T-cell (primary cell): ENCODE measurements at regions of chr4 and their contacts with region 1.

Region 1: DNA sequence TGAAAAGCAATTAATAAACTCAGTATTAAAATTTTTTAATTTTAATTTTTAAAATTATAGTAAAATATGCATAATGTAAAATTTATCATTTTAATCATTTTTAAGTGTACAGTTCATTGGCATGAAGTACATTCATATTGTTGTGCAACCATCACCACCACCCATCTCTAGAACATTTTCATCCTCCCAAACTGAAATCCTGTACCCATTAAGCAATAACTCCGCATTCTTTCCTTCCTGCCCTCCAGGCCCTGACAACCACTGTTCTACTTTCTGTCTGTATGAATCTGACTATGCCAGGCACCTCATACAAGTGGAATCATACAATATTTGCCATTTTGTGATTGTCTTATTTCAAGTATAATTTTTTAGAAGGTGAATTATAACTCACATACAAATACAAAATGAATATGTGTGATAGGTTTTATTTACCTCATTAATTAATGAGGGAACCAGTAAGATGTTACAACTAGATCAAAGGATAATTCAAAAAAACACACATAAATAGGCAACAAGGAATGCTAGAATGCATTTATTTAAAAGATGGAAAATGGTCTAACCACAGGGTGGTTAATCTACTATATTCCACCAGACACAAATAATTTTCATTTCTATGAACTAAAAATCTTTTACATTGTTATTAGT is 13.1 kb upstream of the AFF1 start:
- DNase-seq: no peak
- ATAC-seq: no peak
- H3K4me3 ChIP-seq: no peak overlapping the region
- H3K4me3 Mint-ChIP-seq: no peak overlapping the region
- H3K27ac ChIP-seq: no peak overlapping the region
- H3K27ac Mint-ChIP-seq: no peak overlapping the region
- H3K4me1 ChIP-seq: no peaks in the 10 kb centered on the region
- H3K4me1 Mint-ChIP-seq: peaks cover 0 to 3% (median 2%) of the 10 kb centered on the region in 3 donors
- H3K27me3 ChIP-seq: no peaks in the 10 kb centered on the region
- H3K27me3 Mint-ChIP-seq: no peaks in the 10 kb centered on the region

Region 2: DNA sequence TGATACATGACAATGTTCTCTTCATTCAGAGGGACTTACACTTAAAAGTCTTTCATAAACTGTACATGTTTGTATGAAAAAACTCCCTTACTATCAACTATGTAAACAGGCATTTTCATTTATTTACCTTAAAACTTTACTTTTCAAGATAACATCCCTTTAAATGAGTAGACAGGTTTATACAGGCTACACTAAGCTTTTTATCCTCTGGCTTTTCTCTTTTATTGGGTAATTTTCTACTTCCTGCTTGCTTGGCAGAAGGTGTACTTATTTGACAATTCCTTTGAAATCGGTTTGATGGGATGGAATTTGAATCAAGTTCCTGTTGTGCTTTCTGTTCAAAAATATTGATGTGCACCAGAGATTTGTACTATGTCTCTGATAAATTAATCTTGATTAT is 246.2 kb before region 1 on chr4:
- CTCF ChIA-PET with region 1: no interaction called
- POLR2A ChIA-PET with region 1: no interaction called
- DNase-seq: no peak
- ATAC-seq: no peak
- H3K4me3 ChIP-seq: no peak overlapping the region
- H3K4me3 Mint-ChIP-seq: no peak overlapping the region
- H3K27ac ChIP-seq: no peak overlapping the region
- H3K27ac Mint-ChIP-seq: no peak overlapping the region
- H3K4me1 ChIP-seq: no peaks in the 10 kb centered on the region
- H3K4me1 Mint-ChIP-seq: no peaks in the 10 kb centered on the region
- H3K27me3 ChIP-seq: no peaks in the 10 kb centered on the region
- H3K27me3 Mint-ChIP-seq: peaks cover 0 to 2% of the 10 kb centered on the region in 2 donors

Region 3: DNA sequence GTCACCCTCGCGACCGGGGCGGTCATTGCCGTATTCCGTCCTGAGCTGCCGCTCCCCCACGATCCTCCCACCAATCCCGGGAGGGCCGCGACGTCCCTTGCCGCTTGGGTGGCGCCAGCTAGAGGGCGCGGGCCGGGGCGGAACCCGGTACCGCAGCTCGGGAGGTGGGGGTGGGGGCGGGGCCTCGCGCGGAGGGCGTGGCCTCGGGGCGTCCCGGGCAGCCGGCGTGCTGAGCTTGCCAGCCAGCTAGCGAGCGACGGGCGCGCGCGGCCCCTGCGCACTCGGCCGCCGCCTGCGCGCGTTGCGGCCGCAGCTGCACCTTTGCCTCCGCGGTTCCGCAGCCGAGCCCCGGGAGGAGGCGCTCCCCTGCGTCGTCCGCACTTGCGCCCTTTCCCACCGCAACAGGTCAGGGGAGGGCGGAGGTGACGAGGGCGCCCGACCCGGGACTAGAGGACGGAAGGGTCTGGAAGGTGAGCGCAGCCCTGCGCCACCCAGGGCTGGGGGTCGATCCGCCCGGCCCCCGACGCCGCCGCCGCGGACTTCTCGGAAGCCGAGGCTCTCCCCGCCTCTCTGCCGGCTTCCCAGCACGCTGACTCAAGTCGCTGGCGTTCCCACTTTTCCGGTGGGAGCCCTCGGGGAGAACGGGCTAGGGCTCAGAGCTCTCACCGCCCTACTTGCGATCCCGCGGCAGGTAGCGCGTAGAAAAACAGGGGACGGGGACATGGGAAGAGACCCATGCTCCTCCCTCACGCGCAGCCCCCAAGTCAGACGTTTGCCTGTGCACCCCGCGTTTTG is 13.2 kb after region 1 on chr4 and contains the start of gene AFF1:
- CTCF ChIA-PET with region 1: interaction called, 10 to 42 read pairs
- POLR2A ChIA-PET with region 1: interaction called, 3 read pairs
- DNase-seq: peak; percentile 70 to 96 (median 82)
- ATAC-seq: peak; percentile 77 to 84 (median 80)
- H3K4me3 ChIP-seq: peak within 1 kb of the TSS; percentile 75 to 96
- H3K4me3 Mint-ChIP-seq: peak within 1 kb of the TSS; percentile 84 to 92 (median 87)
- H3K27ac ChIP-seq: peak within 1 kb of the TSS; percentile 82
- H3K27ac Mint-ChIP-seq: peak within 1 kb of the TSS; percentile 96 to 98
- H3K4me1 ChIP-seq: peaks cover 30 to 31% of the 10 kb centered on the region in 2 experiments
- H3K4me1 Mint-ChIP-seq: peaks cover 48 to 54% (median 53%) of the 10 kb centered on the region in 3 donors
- H3K27me3 ChIP-seq: no peaks in the 10 kb centered on the region
- H3K27me3 Mint-ChIP-seq: no peaks in the 10 kb centered on the region
- total RNA-seq, gene AFF1: 65.3 to 112 (median 93.4) TPM

Region 4: GRCh38 chr4:86957214-86957613 is 35.5 kb after region 1 on chr4:
- CTCF ChIA-PET with region 1: interaction called, 8 to 11 read pairs
- POLR2A ChIA-PET with region 1: no interaction called
- DNase-seq: no peak
- ATAC-seq: no peak
- H3K4me3 ChIP-seq: no peak overlapping the region
- H3K4me3 Mint-ChIP-seq: no peak overlapping the region
- H3K27ac ChIP-seq: no peak overlapping the region
- H3K27ac Mint-ChIP-seq: no peak overlapping the region
- H3K4me1 ChIP-seq: peaks cover 5 to 8% of the 10 kb centered on the region in 2 experiments
- H3K4me1 Mint-ChIP-seq: peaks cover 35 to 62% (median 58%) of the 10 kb centered on the region in 3 donors
- H3K27me3 ChIP-seq: no peaks in the 10 kb centered on the region
- H3K27me3 Mint-ChIP-seq: no peaks in the 10 kb centered on the region

Region 5: GRCh38 chr4:86963697-86964096 is 42.0 kb after region 1 on chr4:
- CTCF ChIA-PET with region 1: interaction called in 1 of 2 experiments, 10 read pairs
- POLR2A ChIA-PET with region 1: no interaction called
- DNase-seq: no peak
- ATAC-seq: no peak
- H3K4me3 ChIP-seq: no peak overlapping the region
- H3K4me3 Mint-ChIP-seq: no peak overlapping the region
- H3K27ac ChIP-seq: no peak overlapping the region
- H3K27ac Mint-ChIP-seq: no peak overlapping the region
- H3K4me1 ChIP-seq: peaks cover 5 to 18% of the 10 kb centered on the region in 2 experiments
- H3K4me1 Mint-ChIP-seq: peaks cover 34 to 44% (median 43%) of the 10 kb centered on the region in 3 donors
- H3K27me3 ChIP-seq: no peaks in the 10 kb centered on the region
- H3K27me3 Mint-ChIP-seq: no peaks in the 10 kb centered on the region

Region 6: GRCh38 chr4:87006676-87007527 is 85.2 kb after region 1 on chr4:
- CTCF ChIA-PET with region 1: interaction called, 4 to 13 read pairs
- POLR2A ChIA-PET with region 1: interaction called in 1 of 2 experiments, 3 read pairs
- DNase-seq: peak; percentile 77 to 93 (median 86)
- ATAC-seq: peak; percentile 78 to 85 (median 81)
- H3K4me3 ChIP-seq: peak overlapping the region; percentile 91 to 92
- H3K4me3 Mint-ChIP-seq: peak overlapping the region; percentile 82 to 92 (median 90)
- H3K27ac ChIP-seq: peak overlapping the region; percentile 80
- H3K27ac Mint-ChIP-seq: peak overlapping the region; percentile 99
- H3K4me1 ChIP-seq: peaks cover 17 to 39% of the 10 kb centered on the region in 2 experiments
- H3K4me1 Mint-ChIP-seq: peaks cover 55 to 59% (median 58%) of the 10 kb centered on the region in 3 donors
- H3K27me3 ChIP-seq: no peaks in the 10 kb centered on the region
- H3K27me3 Mint-ChIP-seq: no peaks in the 10 kb centered on the region

Region 7: DNA sequence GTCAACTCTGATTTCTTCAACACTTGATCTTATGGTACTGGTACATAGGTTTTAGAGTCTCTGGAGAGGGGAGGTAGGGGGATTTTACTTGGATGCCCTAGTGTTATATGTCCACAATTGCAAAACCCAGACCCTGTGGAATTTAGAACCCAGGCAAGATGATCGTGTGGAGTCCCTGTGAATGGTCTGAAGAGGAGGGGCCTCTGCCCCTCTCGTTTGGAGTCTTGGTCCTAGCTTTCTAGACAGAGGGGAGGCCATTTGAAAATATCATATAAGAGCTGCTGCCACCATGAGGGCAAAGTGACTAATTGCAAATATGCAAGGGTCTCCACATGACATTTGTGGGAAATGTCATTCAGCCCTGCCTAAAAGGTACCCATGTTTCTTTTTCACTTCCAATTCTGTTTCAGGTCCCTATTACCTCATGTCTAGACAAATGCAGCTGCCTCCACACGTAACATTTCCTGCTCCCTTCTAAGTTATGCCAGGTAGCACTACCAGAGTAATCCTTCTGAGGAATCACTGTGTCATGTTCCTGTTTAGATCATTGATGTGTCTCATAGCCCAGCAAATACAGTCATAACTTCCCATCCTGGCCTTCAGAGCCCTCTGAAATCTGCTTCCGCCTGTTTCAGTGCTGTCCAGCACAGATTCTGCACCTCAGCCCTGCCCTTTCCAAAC is 171.9 kb after region 1 on chr4:
- CTCF ChIA-PET with region 1: interaction called, 154 to 179 read pairs
- POLR2A ChIA-PET with region 1: interaction called, 4 to 5 read pairs
- DNase-seq: peak in 31 of 35 experiments; percentile 10 to 68 (median 32)
- ATAC-seq: peak; percentile 79 to 86 (median 82)
- H3K4me3 ChIP-seq: no peak overlapping the region
- H3K4me3 Mint-ChIP-seq: no peak overlapping the region
- H3K27ac ChIP-seq: no peak overlapping the region
- H3K27ac Mint-ChIP-seq: peak overlapping the region; percentile 82 to 84
- H3K4me1 ChIP-seq: no peaks in the 10 kb centered on the region
- H3K4me1 Mint-ChIP-seq: peaks cover 36 to 52% (median 46%) of the 10 kb centered on the region in 3 donors
- H3K27me3 ChIP-seq: no peaks in the 10 kb centered on the region
- H3K27me3 Mint-ChIP-seq: no peaks in the 10 kb centered on the region

Region 8: GRCh38 chr4:87235020-87235671 is 313.4 kb after region 1 on chr4:
- CTCF ChIA-PET with region 1: interaction called, 9 to 17 read pairs
- POLR2A ChIA-PET with region 1: no interaction called
- DNase-seq: no peak
- ATAC-seq: no peak
- H3K4me3 ChIP-seq: peak overlapping the region in 1 of 2 donors; percentile 45
- H3K4me3 Mint-ChIP-seq: peak overlapping the region; percentile 62 to 78 (median 75)
- H3K27ac ChIP-seq: no peak overlapping the region
- H3K27ac Mint-ChIP-seq: no peak overlapping the region
- H3K4me1 ChIP-seq: peaks cover 0 to 4% of the 10 kb centered on the region in 2 experiments
- H3K4me1 Mint-ChIP-seq: peaks cover 0 to 9% (median 0%) of the 10 kb centered on the region in 3 donors
- H3K27me3 ChIP-seq: no peaks in the 10 kb centered on the region
- H3K27me3 Mint-ChIP-seq: no peaks in the 10 kb centered on the region